Heart left ventricle (tissue), 16 donors: ENCODE measurements at regions of chr3 and their contacts with region 1.

Region 1: GRCh38 chr3:179653096-179653797 is 407 bp downstream of the USP13 start:
- DNase-seq: peak; percentile 77 to 89 (median 85)
- ATAC-seq: peak; percentile 78 to 88 (median 86)
- H3K4me3 ChIP-seq: peak overlapping the region; percentile 61 to 93 (median 88)
- H3K27ac ChIP-seq: peak overlapping the region; percentile 86 to 97 (median 92)
- H3K4me1 ChIP-seq: peaks cover 0 to 30% (median 8%) of the 10 kb centered on the region in 12 donors
- H3K27me3 ChIP-seq: no peaks in the 10 kb centered on the region
- CTCF ChIP-seq: peak in 6 of 12 donors; percentile 10 to 40 (median 30)
- POLR2A ChIP-seq: no peak

Region 2: GRCh38 chr3:179512378-179512777 is 140.9 kb before region 1 on chr3:
- intact Hi-C with region 1: no loop called
- DNase-seq: no peak
- ATAC-seq: peak; percentile 36 to 61 (median 52)
- H3K4me3 ChIP-seq: no peak overlapping the region
- H3K27ac ChIP-seq: peak overlapping the region in 1 of 12 donors; percentile 32
- H3K4me1 ChIP-seq: peaks cover 0 to 9% (median 0%) of the 10 kb centered on the region in 12 donors
- H3K27me3 ChIP-seq: peaks cover 0 to 4% (median 0%) of the 10 kb centered on the region in 9 donors
- CTCF ChIP-seq: no peak
- POLR2A ChIP-seq: no peak

Region 3: DNA sequence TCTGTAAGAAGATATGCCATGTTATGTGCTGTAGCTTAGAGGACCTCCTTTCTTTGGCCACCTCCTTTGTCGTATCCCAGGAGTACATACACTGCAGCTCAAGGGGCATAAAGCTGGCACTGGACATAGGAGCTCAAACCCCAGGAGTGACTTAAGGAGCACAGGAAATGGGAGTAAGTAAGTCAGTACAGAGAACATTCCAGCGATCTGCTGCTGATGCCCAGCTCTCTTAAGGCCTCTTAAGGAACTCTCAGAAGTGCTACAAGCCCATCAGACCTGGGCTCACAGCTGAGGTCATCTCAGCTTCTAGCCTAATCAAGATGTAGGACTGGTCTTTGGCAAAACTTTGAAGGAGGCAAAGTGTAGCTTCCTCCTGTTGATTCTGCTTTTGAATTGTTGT is 112.2 kb before region 1 on chr3:
- intact Hi-C with region 1: no loop called
- DNase-seq: no peak
- ATAC-seq: no peak
- H3K4me3 ChIP-seq: no peak overlapping the region
- H3K27ac ChIP-seq: no peak overlapping the region
- H3K4me1 ChIP-seq: no peaks in the 10 kb centered on the region
- H3K27me3 ChIP-seq: no peaks in the 10 kb centered on the region
- CTCF ChIP-seq: no peak
- POLR2A ChIP-seq: no peak

Region 4: GRCh38 chr3:179681492-179682249 is 28.4 kb after region 1 on chr3:
- intact Hi-C with region 1: loop called in 1 of 10 experiments (anchors 1 kb)
- DNase-seq: no peak
- ATAC-seq: peak; percentile 9 to 41 (median 30)
- H3K4me3 ChIP-seq: peak overlapping the region in 8 of 12 donors; percentile 0 to 43 (median 18)
- H3K27ac ChIP-seq: peak overlapping the region; percentile 15 to 70 (median 48)
- H3K4me1 ChIP-seq: peaks cover 0 to 51% (median 9%) of the 10 kb centered on the region in 12 donors
- H3K27me3 ChIP-seq: no peaks in the 10 kb centered on the region
- CTCF ChIP-seq: no peak
- POLR2A ChIP-seq: no peak

Region 5: GRCh38 chr3:179716811-179717210 is 63.6 kb after region 1 on chr3:
- intact Hi-C with region 1: loop called in 1 of 10 experiments (anchors 5 kb)
- DNase-seq: no peak
- ATAC-seq: peak in 1 of 4 donors; percentile 37
- H3K4me3 ChIP-seq: no peak overlapping the region
- H3K27ac ChIP-seq: peak overlapping the region in 9 of 12 donors; percentile 1 to 57 (median 44)
- H3K4me1 ChIP-seq: peaks cover 0 to 33% (median 8%) of the 10 kb centered on the region in 12 donors
- H3K27me3 ChIP-seq: no peaks in the 10 kb centered on the region
- CTCF ChIP-seq: no peak
- POLR2A ChIP-seq: no peak

Region 6: GRCh38 chr3:179732661-179733348 is 79.6 kb after region 1 on chr3:
- intact Hi-C with region 1: loop called in 5 of 10 experiments (anchors 2 to 10 kb)
- DNase-seq: peak in 4 of 5 donors; percentile 60 to 86 (median 74)
- ATAC-seq: peak; percentile 82 to 93 (median 91)
- H3K4me3 ChIP-seq: no peak overlapping the region
- H3K27ac ChIP-seq: peak overlapping the region; percentile 55 to 89 (median 76)
- H3K4me1 ChIP-seq: peaks cover 0 to 43% (median 13%) of the 10 kb centered on the region in 12 donors
- H3K27me3 ChIP-seq: no peaks in the 10 kb centered on the region
- CTCF ChIP-seq: no peak
- POLR2A ChIP-seq: no peak

Region 7: GRCh38 chr3:179743913-179744312 is 90.7 kb after region 1 on chr3:
- intact Hi-C with region 1: loop called in 4 of 10 experiments (anchors 5 to 10 kb)
- DNase-seq: no peak
- ATAC-seq: peak in 3 of 4 donors; percentile 24 to 47 (median 25)
- H3K4me3 ChIP-seq: no peak overlapping the region
- H3K27ac ChIP-seq: peak overlapping the region in 4 of 12 donors; percentile 17 to 37 (median 20)
- H3K4me1 ChIP-seq: peaks cover 0 to 19% (median 3%) of the 10 kb centered on the region in 12 donors
- H3K27me3 ChIP-seq: no peaks in the 10 kb centered on the region
- CTCF ChIP-seq: no peak
- POLR2A ChIP-seq: no peak